AG04450 (cell line): ENCODE measurements at regions of chr4 and their contacts with region 1.

Region 1: GRCh38 chr4:103099691-103100392 is at the start of gene BDH2:
- DNase-seq: peak; percentile 90
- H3K4me3 ChIP-seq: peak within 1 kb of the TSS; percentile 61
- H3K27ac ChIP-seq: no peak within 1 kb of the TSS
- H3K27me3 ChIP-seq: no peaks in the 10 kb centered on the region
- CTCF ChIP-seq: peak; percentile 67
- polyA plus RNA-seq, gene BDH2: 94.4 and 109 TPM in 2 replicates

Region 2: DNA sequence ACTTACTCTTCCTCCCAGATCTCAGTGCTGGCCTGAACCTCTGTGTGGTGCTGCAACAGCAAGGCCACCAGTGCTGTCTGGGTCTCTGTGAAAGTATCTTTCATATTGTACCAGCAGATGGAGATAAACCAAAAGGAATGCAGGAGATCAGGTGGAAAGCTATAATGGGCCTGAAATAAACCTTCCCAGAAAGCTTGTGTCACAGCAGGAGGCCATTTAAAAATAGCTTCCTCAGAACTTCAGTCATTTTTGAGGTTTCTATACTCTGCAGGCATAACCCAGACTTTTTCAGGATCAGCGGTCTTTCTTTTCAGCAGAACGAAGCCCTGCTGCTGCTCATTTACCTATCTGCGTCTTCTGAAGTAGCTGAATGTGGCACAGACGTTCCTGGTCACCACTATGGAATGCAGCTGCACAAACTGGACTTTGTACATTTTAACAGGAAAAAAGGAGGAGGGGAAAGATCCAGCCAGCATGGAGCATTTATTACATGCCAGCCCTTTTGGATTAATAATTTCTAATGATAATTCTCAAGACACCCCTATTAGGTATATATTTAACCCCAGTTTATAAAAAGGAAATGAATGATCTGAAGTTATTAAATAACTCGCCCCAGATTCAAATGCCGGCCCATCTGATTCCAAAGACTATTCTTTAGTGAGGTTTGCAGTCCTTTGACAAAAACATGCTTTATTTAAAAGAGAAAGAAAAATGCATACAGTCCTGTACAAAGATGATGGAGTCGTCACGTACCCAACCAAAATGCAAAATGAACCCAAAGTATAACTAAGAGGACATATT is 478.9 kb before region 1 on chr4:
- CTCF ChIA-PET with region 1: interaction called, 19 read pairs
- POLR2A ChIA-PET with region 1: no interaction called
- DNase-seq: peak; percentile 38
- H3K4me3 ChIP-seq: peak overlapping the region; percentile 3; the same call in 1 of the 2 replicates
- H3K27ac ChIP-seq: no peak overlapping the region
- H3K27me3 ChIP-seq: no peaks in the 10 kb centered on the region
- CTCF ChIP-seq: peak; percentile 71

Region 3: DNA sequence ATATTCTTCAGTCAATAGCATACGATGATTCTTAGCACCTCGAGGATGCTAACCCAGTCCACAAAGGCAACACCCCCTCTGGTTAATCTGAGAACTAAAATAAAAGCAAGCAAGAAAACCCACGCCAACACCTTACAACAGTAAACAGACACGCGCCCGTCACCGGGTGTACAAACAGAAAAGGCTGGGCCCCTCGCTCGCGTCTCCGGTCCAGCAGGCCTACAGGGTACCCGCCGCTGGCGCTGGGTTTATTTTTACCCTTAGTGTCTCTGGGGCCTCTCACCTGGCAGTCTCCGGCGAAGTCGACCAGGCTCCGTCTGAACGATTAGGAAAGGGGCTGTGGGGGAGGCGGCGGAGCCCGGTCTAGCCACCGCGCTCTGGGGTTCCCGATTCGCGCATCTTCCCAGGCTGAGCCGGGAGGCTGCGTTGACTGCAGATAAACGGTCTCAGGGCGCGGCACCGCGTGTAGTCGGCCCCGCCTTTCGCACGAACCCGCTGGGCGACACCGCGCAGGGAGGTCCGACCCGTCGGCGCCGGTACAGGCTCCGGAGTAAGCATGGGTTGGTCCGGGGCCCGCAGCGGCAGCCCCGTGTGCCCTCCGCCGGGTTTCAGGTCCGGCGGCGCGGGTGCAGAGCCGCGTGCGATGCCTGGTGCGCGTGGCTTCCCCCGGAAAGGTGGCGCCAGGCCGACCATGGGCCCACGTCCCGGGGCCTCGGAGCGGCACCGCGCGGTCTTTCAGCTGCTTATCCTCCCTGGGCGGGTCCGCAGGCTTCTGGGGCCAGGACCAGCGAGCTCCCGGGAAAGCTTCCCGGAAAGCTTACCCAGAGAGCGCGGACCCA is 23.7 kb before region 1 on chr4:
- CTCF ChIA-PET with region 1: interaction called, 30 read pairs
- POLR2A ChIA-PET with region 1: interaction called, 3 read pairs
- DNase-seq: no peak
- H3K4me3 ChIP-seq: peak overlapping the region; percentile 70
- H3K27ac ChIP-seq: peak overlapping the region; percentile 74
- H3K27me3 ChIP-seq: no peaks in the 10 kb centered on the region
- CTCF ChIP-seq: no peak

Region 4: GRCh38 chr4:103118166-103118565 is 18.3 kb after region 1 on chr4:
- CTCF ChIA-PET with region 1: interaction called, 12 read pairs
- POLR2A ChIA-PET with region 1: no interaction called
- DNase-seq: no peak
- H3K4me3 ChIP-seq: no peak overlapping the region
- H3K27ac ChIP-seq: no peak overlapping the region
- H3K27me3 ChIP-seq: no peaks in the 10 kb centered on the region
- CTCF ChIP-seq: no peak

Region 5: GRCh38 chr4:103268746-103269145 is 168.9 kb after region 1 on chr4:
- CTCF ChIA-PET with region 1: no interaction called
- POLR2A ChIA-PET with region 1: no interaction called
- DNase-seq: no peak
- H3K4me3 ChIP-seq: no peak overlapping the region
- H3K27ac ChIP-seq: no peak overlapping the region
- H3K27me3 ChIP-seq: no peaks in the 10 kb centered on the region
- CTCF ChIP-seq: no peak